ENCODE measurements at regions of chr19 and their contacts with region 1.

Region 1: GRCh38 chr19:58182989-58183816 is at the start of gene ZNF274:
- DNase-seq: peak; percentile 84 to 96 (median 90)
- ATAC-seq: peak; percentile 93
- H3K4me3 ChIP-seq: peak within 1 kb of the TSS; percentile 74
- H3K27ac ChIP-seq: peak within 1 kb of the TSS; percentile 100
- H3K4me1 ChIP-seq: peaks cover 6 to 14% of the 10 kb centered on the region in 2 experiments; a peak in 4 of 5 replicates
- H3K27me3 ChIP-seq: no peaks in the 10 kb centered on the region
- CTCF ChIP-seq: no peak
- EP300 ChIP-seq: peak; percentile 33; the same call in 1 of the 2 replicates
- POLR2A ChIP-seq: peak; percentile 98
- RAD21 ChIP-seq: no peak
- polyA plus RNA-seq, gene ZNF274: 5.2 to 5.4 TPM

Region 2: DNA sequence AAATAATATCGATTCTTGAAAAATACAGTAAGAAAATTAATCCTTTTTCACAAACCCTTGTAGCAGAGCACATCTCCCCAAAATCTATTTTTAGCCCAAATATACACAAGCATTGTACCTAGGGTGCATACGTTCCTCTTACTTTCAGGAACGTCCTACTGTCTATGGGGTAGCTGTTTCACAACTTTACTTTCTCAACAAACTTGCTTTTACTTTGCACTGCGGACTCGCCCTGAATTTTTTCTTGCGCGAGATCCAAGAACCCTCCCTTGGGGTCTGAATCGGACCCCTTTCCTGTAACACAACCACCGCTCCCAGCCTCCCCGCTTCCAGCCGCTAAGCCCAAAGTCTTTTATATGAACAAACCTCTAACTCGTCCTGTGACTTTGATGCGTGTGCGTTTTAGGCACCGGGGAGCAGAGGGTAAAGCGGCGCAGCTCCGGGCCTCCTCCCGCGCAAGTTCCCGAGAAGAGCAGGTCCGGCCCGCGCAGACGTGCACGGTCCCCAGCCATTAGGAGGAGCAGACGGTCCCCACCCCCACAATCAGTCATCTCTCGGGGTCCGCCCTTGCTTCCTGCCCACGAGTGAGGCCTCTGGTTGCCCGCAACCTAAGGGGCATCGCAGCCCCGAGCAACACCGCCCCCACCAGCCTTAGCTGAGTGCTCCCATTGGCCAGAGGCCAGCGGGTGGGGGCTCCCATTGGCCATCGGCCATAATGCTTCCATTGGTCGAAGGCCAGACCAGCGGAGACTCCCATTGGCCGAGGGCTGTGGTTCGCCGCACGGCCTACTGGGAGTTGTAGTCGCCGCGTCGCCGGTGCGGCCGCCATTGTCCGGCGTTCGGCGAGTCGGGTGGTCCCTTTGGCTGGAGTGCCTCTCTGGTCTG is 95.2 kb after region 1 on chr19 and contains the start of gene ZNF8:
- CTCF ChIA-PET with region 1: no interaction called
- POLR2A ChIA-PET with region 1: interaction called, 5 read pairs
- in situ Hi-C with region 1: no loop called
- intact Hi-C with region 1: loop called (anchors 1 kb)
- DNase-seq: peak; percentile 99 to 100 (median 99)
- ATAC-seq: peak; percentile 98
- H3K4me3 ChIP-seq: peak within 1 kb of the TSS; percentile 64
- H3K27ac ChIP-seq: peak within 1 kb of the TSS; percentile 84
- H3K4me1 ChIP-seq: peaks cover 10 to 19% of the 10 kb centered on the region in 2 experiments; a peak in 4 of 5 replicates
- H3K27me3 ChIP-seq: no peaks in the 10 kb centered on the region
- CTCF ChIP-seq: 0 out of 6 replicates have a peak, but pooled peaks of 1 of the 3 experiments have one; percentile 13
- EP300 ChIP-seq: no peak
- POLR2A ChIP-seq: peak; percentile 91
- RAD21 ChIP-seq: no peak; a peak in 1 of 4 replicates
- polyA plus RNA-seq, gene ZNF8: 0.71 to 1.0 TPM

Region 3: DNA sequence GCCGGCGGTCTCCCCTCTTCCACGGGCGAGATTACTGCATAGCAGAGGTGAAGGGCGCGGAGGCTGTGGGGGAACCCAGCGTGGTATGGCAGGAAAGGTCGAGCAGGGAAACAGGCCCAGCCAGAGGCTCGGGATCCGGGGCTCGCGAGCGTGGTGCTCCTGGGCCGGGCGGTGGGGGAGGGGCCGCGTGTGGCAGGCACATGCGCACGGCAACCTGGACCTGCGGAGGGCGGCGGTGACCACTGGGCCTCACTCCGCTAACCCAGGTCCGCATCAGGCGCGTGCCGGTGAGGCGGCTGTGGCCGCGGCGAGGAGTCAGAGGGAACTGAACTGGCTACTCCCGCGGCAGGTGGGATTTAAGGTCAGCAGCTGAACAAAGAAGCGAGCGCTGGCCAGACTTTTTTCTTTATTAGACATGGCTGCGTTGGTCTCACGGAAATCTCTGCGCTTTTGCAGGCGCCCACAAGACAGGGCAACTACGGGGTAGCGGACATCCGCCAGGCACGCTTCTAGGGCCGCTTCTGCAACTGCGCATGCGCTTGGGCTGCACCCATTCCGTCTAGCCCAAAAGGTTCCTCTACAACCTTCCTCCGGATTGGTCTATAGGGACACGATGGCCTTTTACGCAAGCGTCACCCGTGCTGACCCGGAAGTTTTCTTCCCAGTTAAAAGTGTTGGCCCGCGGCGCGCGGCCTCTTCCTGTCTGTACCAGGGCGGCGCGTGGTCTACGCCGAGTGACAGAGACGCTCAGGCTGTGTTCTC is 203.6 kb after region 1 on chr19 and contains the start of gene RPS5:
- CTCF ChIA-PET with region 1: no interaction called
- POLR2A ChIA-PET with region 1: no interaction called
- in situ Hi-C with region 1: no loop called
- intact Hi-C with region 1: loop called (anchors 5 kb)
- DNase-seq: peak; percentile 93 to 99 (median 96)
- ATAC-seq: peak; percentile 90
- H3K4me3 ChIP-seq: peak within 1 kb of the TSS; percentile 92
- H3K27ac ChIP-seq: peak within 1 kb of the TSS; percentile 93
- H3K4me1 ChIP-seq: peaks cover 29 to 41% of the 10 kb centered on the region in 2 experiments
- H3K27me3 ChIP-seq: no peaks in the 10 kb centered on the region
- CTCF ChIP-seq: no peak
- EP300 ChIP-seq: peak; percentile 27; the same call in 1 of the 2 replicates
- POLR2A ChIP-seq: peak; percentile 97
- RAD21 ChIP-seq: no peak; a peak in 1 of 4 replicates
- polyA plus RNA-seq, gene RPS5: 2,484 to 2,751 TPM

Region 4: DNA sequence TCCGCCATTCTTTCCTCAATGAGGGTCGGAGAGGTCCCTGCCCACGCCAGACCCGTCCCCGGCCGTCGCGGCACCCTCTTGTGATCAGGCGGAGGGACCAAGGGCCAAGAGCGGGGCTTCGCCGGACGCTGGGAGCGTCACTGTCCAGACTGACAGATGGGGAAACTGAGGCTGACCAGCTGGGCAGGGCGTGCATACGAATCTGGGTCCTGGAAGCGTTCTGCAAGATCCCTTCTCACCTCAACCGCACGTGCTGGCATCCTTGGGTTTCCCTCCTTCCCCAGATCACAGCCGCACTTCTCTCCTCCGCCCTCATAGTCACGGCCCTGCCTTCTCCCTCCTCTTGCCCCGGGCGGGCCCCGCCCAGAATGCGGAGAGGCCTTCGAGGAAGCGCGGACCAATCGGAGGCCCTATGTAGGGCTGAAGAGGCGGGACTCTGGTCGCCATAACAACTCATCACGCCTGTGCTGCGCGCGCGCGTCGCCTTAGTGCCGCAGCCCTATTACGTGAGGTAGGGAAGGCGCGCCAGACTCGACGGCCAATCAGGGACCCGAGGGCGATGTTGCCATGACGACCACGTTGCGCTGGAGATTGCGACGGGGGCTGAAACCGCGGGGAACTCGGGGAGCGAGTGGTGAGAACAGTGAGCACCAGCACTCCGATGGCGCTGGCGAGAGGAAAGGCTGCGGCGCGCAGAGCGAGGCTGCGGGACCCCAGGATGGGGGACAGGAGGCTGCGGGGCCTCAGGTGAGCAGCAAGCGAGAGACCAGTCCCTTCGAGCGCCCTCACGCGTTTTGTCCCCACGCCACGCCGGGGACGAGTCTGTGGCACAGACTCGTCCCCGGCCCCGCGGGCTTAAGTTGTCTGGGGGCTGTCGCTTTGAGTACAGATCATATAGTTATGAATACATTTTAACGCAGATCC is 218.0 kb after region 1 on chr19:
- CTCF ChIA-PET with region 1: no interaction called
- POLR2A ChIA-PET with region 1: interaction called, 3 read pairs
- in situ Hi-C with region 1: no loop called
- intact Hi-C with region 1: loop called (anchors 2 kb)
- DNase-seq: peak; percentile 97 to 100 (median 98)
- ATAC-seq: peak; percentile 97
- H3K4me3 ChIP-seq: peak overlapping the region; percentile 72
- H3K27ac ChIP-seq: peak overlapping the region; percentile 70
- H3K4me1 ChIP-seq: peaks cover 26 to 56% of the 10 kb centered on the region in 2 experiments
- H3K27me3 ChIP-seq: no peaks in the 10 kb centered on the region
- CTCF ChIP-seq: peak in 2 of 3 experiments; percentile 6 to 7; a peak in 1 of 6 replicates
- EP300 ChIP-seq: no peak
- POLR2A ChIP-seq: peak; percentile 93
- RAD21 ChIP-seq: peak in 1 of 2 experiments; percentile 14; a peak in 2 of 4 replicates

Region 5: GRCh38 chr19:58475714-58476497 is 292.7 kb after region 1 on chr19 and contains the start of gene ZNF446:
- CTCF ChIA-PET with region 1: no interaction called
- POLR2A ChIA-PET with region 1: interaction called, 4 read pairs
- in situ Hi-C with region 1: no loop called
- intact Hi-C with region 1: loop called (anchors 5 kb)
- DNase-seq: peak; percentile 91 to 99 (median 94)
- ATAC-seq: peak; percentile 91
- H3K4me3 ChIP-seq: peak within 1 kb of the TSS; percentile 59
- H3K27ac ChIP-seq: peak within 1 kb of the TSS; percentile 92
- H3K4me1 ChIP-seq: peaks cover 26 to 52% of the 10 kb centered on the region in 2 experiments
- H3K27me3 ChIP-seq: no peaks in the 10 kb centered on the region
- CTCF ChIP-seq: peak in 2 of 3 experiments; percentile 21 to 33; a peak in 1 of 6 replicates
- EP300 ChIP-seq: peak; percentile 7; the same call in 1 of the 2 replicates
- POLR2A ChIP-seq: peak; percentile 79
- RAD21 ChIP-seq: no peak; a peak in 1 of 4 replicates
- polyA plus RNA-seq, gene ZNF446: 0.07 to 0.17 TPM

Region 6: DNA sequence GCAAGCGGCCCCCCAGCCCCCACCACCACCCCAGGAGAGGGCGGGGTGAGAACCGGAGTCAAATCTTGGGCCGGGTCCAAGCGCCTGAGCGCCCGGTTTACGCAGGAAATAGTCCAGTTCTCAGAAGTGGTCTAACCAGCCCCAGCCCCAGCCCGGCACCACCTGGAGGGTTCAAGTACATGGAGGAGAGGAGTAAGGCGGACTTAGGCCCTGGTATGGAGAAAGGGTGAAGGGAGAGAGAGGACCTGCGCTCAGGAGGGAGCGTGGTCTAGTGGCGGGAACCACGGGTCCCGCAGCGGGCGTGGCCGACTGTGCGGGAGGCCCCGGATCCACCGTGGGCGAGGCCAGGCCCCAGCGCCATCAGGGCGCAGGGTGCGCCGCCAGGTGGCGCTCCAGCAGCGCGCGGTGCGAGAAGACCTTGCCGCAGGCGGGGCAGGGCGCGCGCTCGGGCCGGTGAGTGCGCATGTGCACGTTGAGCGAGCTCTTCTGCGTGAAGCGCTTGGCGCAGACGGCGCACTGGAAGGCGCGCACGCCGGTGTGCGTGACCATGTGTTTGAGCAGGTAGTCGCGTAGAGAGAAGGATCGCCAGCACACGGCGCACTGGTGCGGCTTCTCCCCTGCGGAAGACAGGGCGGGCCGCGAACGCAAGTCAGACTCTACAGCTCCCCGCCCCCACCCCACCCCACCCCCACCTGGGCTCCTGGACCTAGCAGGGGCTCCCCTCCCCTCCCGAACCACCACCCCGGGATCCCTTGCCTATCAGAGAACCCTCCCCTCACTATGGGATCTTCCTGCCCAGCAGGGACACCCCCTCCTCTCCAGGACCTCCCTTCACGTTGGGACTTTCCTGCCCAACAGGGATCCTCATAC is 330.7 kb after region 1 on chr19:
- CTCF ChIA-PET with region 1: interaction called, 8 read pairs
- POLR2A ChIA-PET with region 1: interaction called, 9 read pairs
- in situ Hi-C with region 1: no loop called
- intact Hi-C with region 1: loop called (anchors 5 kb)
- DNase-seq: peak; percentile 91 to 96 (median 92)
- ATAC-seq: peak; percentile 92
- H3K4me3 ChIP-seq: peak overlapping the region; percentile 53
- H3K27ac ChIP-seq: peak overlapping the region; percentile 79
- H3K4me1 ChIP-seq: peaks cover 16 to 73% of the 10 kb centered on the region in 2 experiments
- H3K27me3 ChIP-seq: no peaks in the 10 kb centered on the region
- CTCF ChIP-seq: peak; percentile 85 to 90 (median 90)
- EP300 ChIP-seq: no peak
- POLR2A ChIP-seq: peak; percentile 69
- RAD21 ChIP-seq: peak; percentile 77 to 80